Vagina (tissue), 2 donors: ENCODE measurements at regions of chr6 and their contacts with region 1.

Region 1: DNA sequence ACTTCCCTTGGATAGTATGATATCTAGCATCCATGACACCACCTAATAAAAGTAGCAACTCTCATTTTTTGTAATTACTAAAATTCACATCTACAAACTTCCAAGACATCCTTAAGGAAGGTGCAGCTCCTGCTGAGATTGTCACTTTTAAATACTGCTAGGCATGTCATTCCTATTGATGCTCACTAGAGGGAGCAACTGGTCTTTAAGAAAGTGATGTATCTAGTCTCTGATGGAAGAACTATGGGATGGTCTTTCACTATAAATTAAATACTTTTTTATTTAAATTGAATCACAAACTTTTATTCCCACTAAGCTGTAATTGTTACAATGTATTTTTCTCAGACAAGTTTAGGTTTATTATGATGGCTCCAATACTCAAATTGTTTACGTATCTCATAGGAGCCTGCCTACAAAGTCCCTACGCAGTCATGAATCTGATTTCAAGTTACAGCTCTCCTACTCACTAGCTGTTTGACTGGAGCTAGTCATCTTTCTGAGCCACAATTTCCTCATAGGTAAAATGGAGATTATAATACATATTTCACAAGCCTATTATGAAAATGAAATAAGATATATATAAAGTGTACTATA is 8.1 kb upstream of the TSPYL1 start:
- DNase-seq: no peak
- H3K4me3 ChIP-seq: no peak overlapping the region
- H3K27ac ChIP-seq: no peak overlapping the region
- H3K4me1 ChIP-seq: no peaks in the 10 kb centered on the region
- H3K27me3 ChIP-seq: no peaks in the 10 kb centered on the region
- CTCF ChIP-seq: peak; percentile 69 to 89 (median 82)
- POLR2A ChIP-seq: no peak

Region 2: GRCh38 chr6:116352515-116353471 is 65.0 kb after region 1 on chr6:
- intact Hi-C with region 1: no loop called
- DNase-seq: no peak
- H3K4me3 ChIP-seq: no peak overlapping the region
- H3K27ac ChIP-seq: peak overlapping the region; percentile 52
- H3K4me1 ChIP-seq: no peaks in the 10 kb centered on the region
- H3K27me3 ChIP-seq: no peaks in the 10 kb centered on the region
- CTCF ChIP-seq: no peak
- POLR2A ChIP-seq: no peak

Region 3: GRCh38 chr6:116531675-116532570 is 244.1 kb after region 1 on chr6:
- intact Hi-C with region 1: loop called (anchors 5 kb)
- DNase-seq: no peak
- H3K4me3 ChIP-seq: no peak overlapping the region
- H3K27ac ChIP-seq: no peak overlapping the region
- H3K4me1 ChIP-seq: no peaks in the 10 kb centered on the region
- H3K27me3 ChIP-seq: no peaks in the 10 kb centered on the region
- CTCF ChIP-seq: peak; percentile 35 to 80 (median 71)
- POLR2A ChIP-seq: no peak